ENCODE measurements at regions of chr12 and their contacts with region 1.

Region 1: GRCh38 chr12:9869307-9870161 is at the start of gene CLEC2B:
- DNase-seq: peak; percentile 59
- ATAC-seq: peak; percentile 69
- H3K4me3 Mint-ChIP-seq: peak within 1 kb of the TSS; percentile 77
- H3K27ac Mint-ChIP-seq: peak within 1 kb of the TSS; percentile 95
- H3K4me1 Mint-ChIP-seq: peaks cover 23% of the 10 kb centered on the region
- H3K27me3 Mint-ChIP-seq: no peaks in the 10 kb centered on the region
- total RNA-seq, gene CLEC2B: 21.8 to 25.8 TPM

Region 2: GRCh38 chr12:9673404-9674225 is 195.9 kb before region 1 on chr12:
- CTCF ChIA-PET with region 1: no interaction called
- POLR2A ChIA-PET with region 1: interaction called, 7 read pairs
- intact Hi-C with region 1: loop called (anchors 2 to 5 kb)
- DNase-seq: peak; percentile 89
- ATAC-seq: peak; percentile 47
- H3K4me3 Mint-ChIP-seq: peak overlapping the region; percentile 93
- H3K27ac Mint-ChIP-seq: peak overlapping the region; percentile 99
- H3K4me1 Mint-ChIP-seq: peaks cover 47% of the 10 kb centered on the region
- H3K27me3 Mint-ChIP-seq: no peaks in the 10 kb centered on the region

Region 3: GRCh38 chr12:9760699-9761418 is 108.7 kb before region 1 on chr12 and contains the start of gene CD69:
- CTCF ChIA-PET with region 1: interaction called, 3 read pairs
- POLR2A ChIA-PET with region 1: interaction called, 12 read pairs
- intact Hi-C with region 1: no loop called
- DNase-seq: peak; percentile 87
- ATAC-seq: peak; percentile 55
- H3K4me3 Mint-ChIP-seq: peak within 1 kb of the TSS; percentile 99
- H3K27ac Mint-ChIP-seq: peak within 1 kb of the TSS; percentile 100
- H3K4me1 Mint-ChIP-seq: peaks cover 49% of the 10 kb centered on the region
- H3K27me3 Mint-ChIP-seq: no peaks in the 10 kb centered on the region
- total RNA-seq, gene CD69: 97.9 to 127 TPM

Region 4: GRCh38 chr12:9925708-9926393 is 56.3 kb after region 1 on chr12:
- CTCF ChIA-PET with region 1: interaction called, 3 read pairs
- POLR2A ChIA-PET with region 1: no interaction called
- intact Hi-C with region 1: loop called (anchors 5 kb)
- DNase-seq: peak; percentile 19
- ATAC-seq: peak; percentile 61
- H3K4me3 Mint-ChIP-seq: peak overlapping the region; percentile 10
- H3K27ac Mint-ChIP-seq: peak overlapping the region; percentile 12
- H3K4me1 Mint-ChIP-seq: peaks cover 15% of the 10 kb centered on the region
- H3K27me3 Mint-ChIP-seq: peaks cover 2% of the 10 kb centered on the region

Region 5: GRCh38 chr12:10613349-10614055 is 744.0 kb after region 1 on chr12 and contains the start of gene MAGOHB:
- CTCF ChIA-PET with region 1: no interaction called
- POLR2A ChIA-PET with region 1: no interaction called
- intact Hi-C with region 1: loop called in 1 of 2 experiments (anchors 5 kb)
- DNase-seq: peak; percentile 99
- ATAC-seq: peak; percentile 96
- H3K4me3 Mint-ChIP-seq: peak within 1 kb of the TSS; percentile 99
- H3K27ac Mint-ChIP-seq: peak within 1 kb of the TSS; percentile 100
- H3K4me1 Mint-ChIP-seq: peaks cover 25% of the 10 kb centered on the region
- H3K27me3 Mint-ChIP-seq: peaks cover 6% of the 10 kb centered on the region
- total RNA-seq, gene MAGOHB: 66.3 to 89.3 TPM